Caco-2 (cell line): ENCODE measurements at regions of chr13 and their contacts with region 1.

Region 1: DNA sequence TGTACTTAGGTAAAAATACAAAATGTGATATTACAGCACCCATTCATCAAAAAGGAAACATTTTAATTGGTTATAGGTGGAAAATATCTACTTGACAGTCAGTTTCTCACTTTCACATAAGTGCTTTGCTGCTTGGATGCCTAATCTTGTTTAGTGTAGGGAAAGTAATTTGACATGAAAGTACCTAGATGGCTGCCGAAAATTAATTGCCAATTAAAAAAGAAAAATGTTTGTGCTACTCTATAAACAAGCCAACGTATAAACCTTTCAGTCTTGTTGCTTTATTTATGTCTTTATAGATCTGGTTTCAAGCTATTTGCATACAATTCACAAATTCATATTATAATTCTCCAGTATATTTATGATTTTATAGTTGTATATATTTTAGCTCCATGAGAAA is 729.9 kb downstream of the DACH1 start:
- DNase-seq: no peak
- H3K4me3 ChIP-seq: no peak overlapping the region
- H3K4me3 Mint-ChIP-seq: no peak overlapping the region
- H3K27ac Mint-ChIP-seq: no peak overlapping the region
- H3K4me1 ChIP-seq: no peaks in the 10 kb centered on the region
- H3K4me1 Mint-ChIP-seq: no peaks in the 10 kb centered on the region
- H3K27me3 ChIP-seq: no peaks in the 10 kb centered on the region
- H3K27me3 Mint-ChIP-seq: no peaks in the 10 kb centered on the region
- CTCF ChIP-seq: no peak

Region 2: GRCh38 chr13:70795484-70795883 is 341.6 kb before region 1 on chr13:
- CTCF ChIA-PET with region 1: no interaction called
- POLR2A ChIA-PET with region 1: no interaction called
- intact Hi-C with region 1: loop called (anchors 5 kb)
- DNase-seq: no peak
- H3K4me3 ChIP-seq: no peak overlapping the region
- H3K4me3 Mint-ChIP-seq: no peak overlapping the region
- H3K27ac Mint-ChIP-seq: no peak overlapping the region
- H3K4me1 ChIP-seq: no peaks in the 10 kb centered on the region
- H3K4me1 Mint-ChIP-seq: no peaks in the 10 kb centered on the region
- H3K27me3 ChIP-seq: no peaks in the 10 kb centered on the region
- H3K27me3 Mint-ChIP-seq: no peaks in the 10 kb centered on the region
- CTCF ChIP-seq: peak in 1 of 2 experiments; percentile 29